ENCODE measurements at regions of chr17 and their contacts with region 1.

Region 1: GRCh38 chr17:21043286-21044232 is 748 bp upstream of the USP22 start:
- DNase-seq: peak; percentile 96
- H3K4me3 Mint-ChIP-seq: peak overlapping the region; percentile 75
- H3K27ac Mint-ChIP-seq: peak overlapping the region; percentile 81
- H3K4me1 Mint-ChIP-seq: peaks cover 17% of the 10 kb centered on the region
- H3K27me3 Mint-ChIP-seq: peaks cover 3% of the 10 kb centered on the region

Region 2: GRCh38 chr17:20896153-20896649 is 147.4 kb before region 1 on chr17:
- intact Hi-C with region 1: no loop called
- DNase-seq: peak; percentile 12
- H3K4me3 Mint-ChIP-seq: no peak overlapping the region
- H3K27ac Mint-ChIP-seq: no peak overlapping the region
- H3K4me1 Mint-ChIP-seq: no peaks in the 10 kb centered on the region
- H3K27me3 Mint-ChIP-seq: peaks cover 7% of the 10 kb centered on the region

Region 3: GRCh38 chr17:21098934-21099689 is 55.6 kb after region 1 on chr17:
- intact Hi-C with region 1: loop called (anchors 1 kb)
- DNase-seq: peak; percentile 76
- H3K4me3 Mint-ChIP-seq: peak overlapping the region; percentile 93
- H3K27ac Mint-ChIP-seq: peak overlapping the region; percentile 97
- H3K4me1 Mint-ChIP-seq: peaks cover 9% of the 10 kb centered on the region
- H3K27me3 Mint-ChIP-seq: no peaks in the 10 kb centered on the region

Region 4: GRCh38 chr17:21214015-21214776 is 170.6 kb after region 1 on chr17 and contains the start of gene TMEM11:
- intact Hi-C with region 1: loop called (anchors 1 kb)
- DNase-seq: peak; percentile 94
- H3K4me3 Mint-ChIP-seq: peak within 1 kb of the TSS; percentile 94
- H3K27ac Mint-ChIP-seq: peak within 1 kb of the TSS; percentile 94
- H3K4me1 Mint-ChIP-seq: peaks cover 40% of the 10 kb centered on the region
- H3K27me3 Mint-ChIP-seq: no peaks in the 10 kb centered on the region
- total RNA-seq, gene TMEM11: 27.1 and 30.5 TPM in 2 replicates